Activated CD4-positive, alpha-beta T cell treated with anti-CD3 and anti-CD28 coated beads for 36 hours (primary cell): ENCODE measurements at regions of chr5 and their contacts with region 1.

Region 1: DNA sequence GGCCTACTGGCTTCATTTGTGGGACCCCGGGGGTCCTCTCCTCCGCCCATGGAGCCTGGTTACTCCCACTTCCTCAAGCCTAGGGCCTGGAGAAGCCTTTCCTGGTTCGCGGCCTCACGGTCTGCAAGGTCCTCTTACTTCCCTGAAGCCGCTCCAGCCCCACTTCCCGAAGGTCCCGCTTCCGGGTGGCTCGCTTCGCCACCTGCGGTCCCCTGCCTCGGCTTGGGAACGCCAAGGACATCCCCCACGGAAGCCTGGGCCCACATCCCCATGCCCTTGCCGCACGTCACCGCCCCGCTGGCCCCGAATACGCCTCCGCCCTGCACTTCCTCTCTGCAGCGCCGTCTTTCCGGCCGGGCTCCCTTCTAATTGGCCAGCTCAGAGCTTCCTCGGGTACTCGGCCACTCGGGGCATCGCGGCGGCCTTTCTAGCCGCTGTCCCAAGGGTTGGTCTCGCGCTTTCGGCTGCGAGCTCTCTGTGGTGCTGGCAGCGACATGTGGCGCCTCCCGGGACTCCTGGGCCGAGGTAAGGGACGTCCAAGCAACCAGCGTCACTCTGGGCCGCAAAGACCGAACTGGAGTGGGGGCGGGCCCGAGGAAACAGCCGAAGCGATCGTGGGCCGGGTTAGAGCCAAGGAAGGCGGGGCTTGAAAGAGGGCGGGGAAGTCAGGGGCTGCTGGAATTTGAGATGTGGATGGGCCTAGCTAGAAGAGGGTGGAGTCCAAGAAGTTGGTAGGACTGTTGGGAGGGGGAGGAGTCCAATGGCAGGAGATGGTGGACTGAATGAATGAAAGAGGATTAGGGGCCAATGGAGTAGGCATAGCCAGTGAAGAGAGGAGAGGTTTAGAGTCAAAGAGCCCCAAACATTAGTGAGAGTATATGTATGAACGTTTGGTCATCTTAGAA is at the start of gene DELE1:
- DNase-seq: peak; percentile 96
- ATAC-seq: peak; percentile 94
- H3K4me3 Mint-ChIP-seq: peak within 1 kb of the TSS; percentile 90
- H3K27ac Mint-ChIP-seq: peak within 1 kb of the TSS; percentile 96
- H3K4me1 Mint-ChIP-seq: peaks cover 16% of the 10 kb centered on the region
- H3K27me3 Mint-ChIP-seq: no peaks in the 10 kb centered on the region
- total RNA-seq, gene DELE1: 48.7 to 56.1 TPM

Region 2: GRCh38 chr5:141320225-141321169 is 603.2 kb before region 1 on chr5 and contains the start of gene TAF7:
- CTCF ChIA-PET with region 1: no interaction called
- POLR2A ChIA-PET with region 1: no interaction called
- intact Hi-C with region 1: loop called in 1 of 2 experiments (anchors 10 kb)
- DNase-seq: peak; percentile 96
- ATAC-seq: peak; percentile 96
- H3K4me3 Mint-ChIP-seq: peak within 1 kb of the TSS; percentile 91
- H3K27ac Mint-ChIP-seq: peak within 1 kb of the TSS; percentile 100
- H3K4me1 Mint-ChIP-seq: peaks cover 23% of the 10 kb centered on the region
- H3K27me3 Mint-ChIP-seq: peaks cover 2% of the 10 kb centered on the region
- total RNA-seq, gene TAF7: 45.2 to 54.4 TPM

Region 3: GRCh38 chr5:141570655-141571054 is 353.0 kb before region 1 on chr5:
- CTCF ChIA-PET with region 1: no interaction called
- POLR2A ChIA-PET with region 1: no interaction called
- intact Hi-C with region 1: no loop called
- DNase-seq: no peak
- ATAC-seq: no peak
- H3K4me3 Mint-ChIP-seq: no peak overlapping the region
- H3K27ac Mint-ChIP-seq: peak overlapping the region; percentile 7
- H3K4me1 Mint-ChIP-seq: peaks cover 10% of the 10 kb centered on the region
- H3K27me3 Mint-ChIP-seq: no peaks in the 10 kb centered on the region

Region 4: GRCh38 chr5:141636413-141637122 is 287.1 kb before region 1 on chr5 and contains the starts of genes HDAC3 and RELL2:
- CTCF ChIA-PET with region 1: no interaction called
- POLR2A ChIA-PET with region 1: interaction called, 6 read pairs
- intact Hi-C with region 1: loop called in 1 of 2 experiments (anchors 1 kb)
- DNase-seq: peak; percentile 97
- ATAC-seq: peak; percentile 82
- H3K4me3 Mint-ChIP-seq: peak within 1 kb of the TSS; percentile 92
- H3K27ac Mint-ChIP-seq: peak within 1 kb of the TSS; percentile 92
- H3K4me1 Mint-ChIP-seq: peaks cover 45% of the 10 kb centered on the region
- H3K27me3 Mint-ChIP-seq: no peaks in the 10 kb centered on the region
- total RNA-seq, gene HDAC3: 85.9 to 88.6 TPM
- total RNA-seq, gene RELL2: 24.3 to 27.8 TPM

Region 5: DNA sequence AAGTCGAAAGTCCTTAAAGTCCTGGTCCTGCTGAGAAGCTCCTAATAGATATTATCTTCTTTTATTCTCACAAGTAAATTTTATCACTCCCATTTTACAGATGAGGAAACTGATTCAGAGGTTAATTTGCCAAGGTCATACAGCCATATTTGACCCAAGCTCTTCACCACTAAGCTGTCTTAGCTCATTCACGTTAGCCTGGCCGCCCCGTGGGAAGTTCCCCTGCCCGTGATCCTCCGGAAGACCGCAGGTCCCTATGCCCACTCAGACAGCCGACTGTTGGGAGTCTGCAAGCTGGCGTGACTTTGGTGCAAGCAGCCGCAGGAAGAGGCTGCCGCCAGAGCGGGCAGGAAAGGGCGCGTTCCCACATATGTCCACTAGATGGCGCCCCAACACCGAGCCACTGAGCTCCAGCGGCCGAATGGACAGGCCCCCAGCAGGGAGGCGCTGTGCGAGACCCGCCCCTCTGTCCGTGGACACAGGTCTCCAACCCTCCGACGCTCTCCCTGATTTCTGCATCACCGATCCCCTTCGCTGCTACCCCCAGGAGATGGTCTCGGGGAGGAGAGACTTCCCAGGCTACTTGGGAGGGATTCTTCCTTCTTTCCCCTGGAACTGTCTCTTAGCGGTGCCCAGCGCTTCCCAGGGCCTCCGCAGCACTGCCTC is 231.7 kb before region 1 on chr5:
- CTCF ChIA-PET with region 1: interaction called, 10 read pairs
- POLR2A ChIA-PET with region 1: interaction called, 4 read pairs
- intact Hi-C with region 1: loop called in 1 of 2 experiments (anchors 1 kb)
- DNase-seq: peak; percentile 93
- ATAC-seq: peak; percentile 71
- H3K4me3 Mint-ChIP-seq: peak overlapping the region; percentile 64
- H3K27ac Mint-ChIP-seq: peak overlapping the region; percentile 55
- H3K4me1 Mint-ChIP-seq: peaks cover 25% of the 10 kb centered on the region
- H3K27me3 Mint-ChIP-seq: peaks cover 4% of the 10 kb centered on the region

Region 6: GRCh38 chr5:141849375-141850243 is 74.1 kb before region 1 on chr5:
- CTCF ChIA-PET with region 1: no interaction called
- POLR2A ChIA-PET with region 1: interaction called, 6 read pairs
- intact Hi-C with region 1: loop called in 1 of 2 experiments (anchors 1 kb)
- DNase-seq: peak; percentile 87
- ATAC-seq: peak; percentile 80
- H3K4me3 Mint-ChIP-seq: peak overlapping the region; percentile 78
- H3K27ac Mint-ChIP-seq: peak overlapping the region; percentile 86
- H3K4me1 Mint-ChIP-seq: peaks cover 15% of the 10 kb centered on the region
- H3K27me3 Mint-ChIP-seq: peaks cover 2% of the 10 kb centered on the region

Region 7: GRCh38 chr5:142006363-142007236 is 82.9 kb after region 1 on chr5:
- CTCF ChIA-PET with region 1: no interaction called
- POLR2A ChIA-PET with region 1: no interaction called
- intact Hi-C with region 1: loop called in 1 of 2 experiments (anchors 5 kb)
- DNase-seq: peak; percentile 85
- ATAC-seq: peak; percentile 90
- H3K4me3 Mint-ChIP-seq: peak overlapping the region; percentile 31
- H3K27ac Mint-ChIP-seq: peak overlapping the region; percentile 89
- H3K4me1 Mint-ChIP-seq: peaks cover 70% of the 10 kb centered on the region
- H3K27me3 Mint-ChIP-seq: no peaks in the 10 kb centered on the region

Region 8: DNA sequence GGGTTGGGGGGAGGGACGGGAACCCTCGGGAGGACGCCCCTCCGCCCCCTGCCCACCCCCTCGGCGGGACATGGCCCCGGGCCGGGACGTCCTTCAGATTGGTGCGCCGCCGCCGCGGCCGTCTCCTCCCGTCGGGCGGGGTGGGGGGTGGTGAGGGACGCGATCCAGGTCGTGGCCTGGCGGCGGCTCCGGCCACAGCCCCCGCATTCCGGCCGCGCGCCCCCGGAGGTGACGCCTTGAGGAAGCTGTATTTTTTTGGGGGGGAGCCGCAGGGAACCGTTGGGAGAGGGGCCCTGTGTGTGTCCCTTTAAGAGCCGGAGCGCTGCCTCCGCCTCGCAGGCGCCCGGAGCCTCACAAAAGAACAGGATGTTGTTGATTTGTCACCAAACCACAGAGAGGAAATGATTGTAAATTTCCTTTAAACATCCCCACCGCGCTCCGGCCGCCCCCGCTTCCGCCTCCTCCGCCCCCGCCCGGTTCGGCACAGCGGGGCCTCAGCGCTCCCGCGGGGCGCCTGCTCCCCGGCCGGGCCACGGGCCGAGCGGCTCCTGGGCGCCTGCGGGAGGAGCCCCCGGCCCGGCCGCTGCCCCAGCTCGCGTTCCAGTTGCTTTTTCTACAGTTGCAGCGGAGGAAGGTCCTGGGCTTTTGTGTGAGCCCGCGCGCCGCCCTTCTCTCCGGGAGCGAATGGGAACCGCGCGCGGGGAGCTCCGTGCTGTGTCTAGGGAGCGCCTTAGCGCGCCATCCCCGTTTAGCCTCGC is 433.2 kb after region 1 on chr5:
- CTCF ChIA-PET with region 1: no interaction called
- POLR2A ChIA-PET with region 1: no interaction called
- intact Hi-C with region 1: loop called in 1 of 2 experiments (anchors 1 kb)
- DNase-seq: peak; percentile 94
- ATAC-seq: peak; percentile 85
- H3K4me3 Mint-ChIP-seq: peak overlapping the region; percentile 70
- H3K27ac Mint-ChIP-seq: peak overlapping the region; percentile 96
- H3K4me1 Mint-ChIP-seq: peaks cover 49% of the 10 kb centered on the region
- H3K27me3 Mint-ChIP-seq: no peaks in the 10 kb centered on the region